Posterior cingulate gyrus (tissue), 11 donors: ENCODE measurements at regions of chr11 and their contacts with region 1.

Region 1: DNA sequence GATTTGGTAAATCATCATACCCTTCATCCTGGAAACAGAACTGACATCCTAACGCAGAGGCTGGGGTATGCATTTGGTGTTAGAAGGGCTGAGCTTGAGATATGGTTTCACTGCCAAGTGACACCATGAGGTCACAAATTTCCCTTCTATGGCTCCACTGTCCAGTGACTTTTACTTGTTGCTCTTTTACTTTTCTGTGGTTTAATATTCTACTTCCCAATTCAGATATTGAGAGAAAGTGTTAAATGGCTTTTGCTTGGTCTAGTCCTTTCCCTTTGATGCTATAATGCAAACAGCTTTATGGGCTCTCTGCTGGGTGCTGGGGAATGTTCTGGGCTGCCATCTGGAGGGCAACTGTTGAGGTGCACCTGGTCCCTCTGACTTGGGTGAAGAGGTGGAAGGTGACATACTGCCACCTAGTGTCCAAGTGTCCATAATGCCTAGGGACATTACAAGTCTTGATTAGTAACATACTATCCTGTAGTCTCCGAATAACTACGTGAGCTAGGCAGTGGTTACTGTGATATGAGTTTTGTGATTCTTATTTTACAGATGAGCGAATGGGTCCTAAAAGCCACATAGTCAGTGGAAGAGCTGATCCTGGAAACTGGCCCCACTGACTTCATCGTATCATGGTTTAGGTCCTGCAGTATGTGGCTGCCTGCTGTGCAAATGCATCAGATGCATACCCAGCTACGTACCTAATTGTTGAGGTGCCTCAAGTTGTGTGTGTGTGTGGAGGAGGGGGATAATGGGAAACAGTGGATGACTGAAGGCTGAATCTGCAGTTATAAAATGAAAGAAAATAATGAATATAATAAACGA is 149.1 kb upstream of the RAG2 start:
- DNase-seq: peak; percentile 45 to 95 (median 76)

Region 2: GRCh38 chr11:35579557-35580396 is 1167.3 kb before region 1 on chr11:
- intact Hi-C with region 1: no loop called
- DNase-seq: no peak

Region 3: GRCh38 chr11:36149538-36150242 is 597.4 kb before region 1 on chr11:
- intact Hi-C with region 1: no loop called
- DNase-seq: peak in 2 of 10 donors; percentile 36 to 66

Region 4: GRCh38 chr11:36258730-36259360 is 488.3 kb before region 1 on chr11:
- intact Hi-C with region 1: no loop called
- DNase-seq: peak; percentile 37 to 96 (median 64)

Region 5: GRCh38 chr11:36702330-36703055 is 44.6 kb before region 1 on chr11:
- intact Hi-C with region 1: loop called (anchors 1 kb)
- DNase-seq: peak in 4 of 10 donors; percentile 16 to 62 (median 20)

Region 6: DNA sequence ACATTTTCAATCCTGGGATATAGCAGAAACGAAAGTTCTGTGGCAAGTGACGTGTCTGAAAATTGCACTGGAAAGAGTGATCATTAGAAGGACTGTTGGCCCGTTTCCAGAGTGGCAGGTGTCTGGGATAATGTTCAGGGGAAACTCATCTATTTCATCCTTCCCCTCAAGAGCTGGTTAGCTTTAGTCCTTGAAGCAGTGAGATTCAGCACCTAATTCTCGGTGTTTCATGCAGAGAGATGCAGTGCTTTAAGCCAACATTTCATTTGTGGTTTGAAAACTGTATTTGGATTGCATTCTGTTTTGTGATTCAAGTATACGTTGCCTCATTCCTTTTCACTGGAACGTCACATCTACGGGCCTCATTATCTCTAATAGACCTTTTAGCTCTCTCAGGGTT is 56.0 kb after region 1 on chr11:
- intact Hi-C with region 1: no loop called
- DNase-seq: no peak